Activated T-helper 1 cell treated with anti-CD3 and anti-CD28 coated beads, Interleukin-12 subunit alpha, Interleukin-12 subunit beta, Interleukin-2, Interleukin-4 antibody, amounts not matched to agents 30 ng/mL and 10 ng/mL and 1 ng/mL, durations not matched to agents 14 hours and 24 hours and 36 hours (primary cell): ENCODE measurements at regions of chr12 and their contacts with region 1.

Region 1: DNA sequence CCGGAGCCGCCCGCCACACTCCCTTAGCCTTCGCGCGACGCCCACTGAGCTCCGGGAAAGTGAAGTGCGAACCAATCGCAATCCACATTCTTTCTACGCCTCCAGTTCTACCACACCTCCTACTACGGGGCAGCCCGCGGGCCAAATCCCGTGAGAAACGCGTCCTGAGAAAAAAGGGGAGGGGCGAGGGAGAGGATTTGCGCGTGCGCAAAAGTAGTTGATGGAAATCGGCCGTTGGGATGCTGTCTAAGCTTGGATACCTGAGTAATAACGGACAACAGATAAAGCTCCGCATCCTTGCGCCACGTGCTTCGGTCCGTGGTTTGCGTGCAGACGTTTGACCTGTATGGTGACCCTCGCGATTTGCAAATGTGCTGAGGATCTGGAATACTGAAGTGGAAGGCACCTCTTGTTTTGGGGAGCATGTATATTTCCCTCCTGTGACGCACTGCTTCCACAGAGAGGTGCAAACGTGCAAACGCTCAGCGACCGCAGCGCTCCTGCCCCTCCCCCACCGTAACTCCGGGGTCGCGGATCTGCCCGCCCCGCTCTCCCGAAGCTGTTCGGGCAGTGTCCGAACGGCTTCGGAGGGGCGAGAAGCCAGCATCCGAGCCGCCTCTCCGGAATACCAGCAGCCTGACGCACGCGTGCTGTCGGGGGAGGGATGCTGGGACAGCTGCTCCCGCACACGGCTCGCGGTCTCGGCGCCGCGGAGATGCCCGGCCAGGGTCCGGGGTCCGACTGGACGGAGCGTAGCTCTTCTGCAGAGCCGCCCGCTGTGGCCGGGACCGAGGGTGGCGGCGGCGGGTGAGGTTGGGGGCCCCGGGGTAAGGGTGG is at the starts of genes FAM216A and GPN3:
- DNase-seq: peak; percentile 96
- H3K4me3 Mint-ChIP-seq: peak within 1 kb of the TSS; percentile 96
- H3K27ac Mint-ChIP-seq: peak within 1 kb of the TSS; percentile 95
- H3K4me1 Mint-ChIP-seq: peaks cover 31% of the 10 kb centered on the region
- H3K27me3 Mint-ChIP-seq: no peaks in the 10 kb centered on the region
- total RNA-seq, gene FAM216A: 40.8 and 45.9 TPM in 2 replicates
- total RNA-seq, gene GPN3: 50.3 and 55.5 TPM in 2 replicates

Region 2: DNA sequence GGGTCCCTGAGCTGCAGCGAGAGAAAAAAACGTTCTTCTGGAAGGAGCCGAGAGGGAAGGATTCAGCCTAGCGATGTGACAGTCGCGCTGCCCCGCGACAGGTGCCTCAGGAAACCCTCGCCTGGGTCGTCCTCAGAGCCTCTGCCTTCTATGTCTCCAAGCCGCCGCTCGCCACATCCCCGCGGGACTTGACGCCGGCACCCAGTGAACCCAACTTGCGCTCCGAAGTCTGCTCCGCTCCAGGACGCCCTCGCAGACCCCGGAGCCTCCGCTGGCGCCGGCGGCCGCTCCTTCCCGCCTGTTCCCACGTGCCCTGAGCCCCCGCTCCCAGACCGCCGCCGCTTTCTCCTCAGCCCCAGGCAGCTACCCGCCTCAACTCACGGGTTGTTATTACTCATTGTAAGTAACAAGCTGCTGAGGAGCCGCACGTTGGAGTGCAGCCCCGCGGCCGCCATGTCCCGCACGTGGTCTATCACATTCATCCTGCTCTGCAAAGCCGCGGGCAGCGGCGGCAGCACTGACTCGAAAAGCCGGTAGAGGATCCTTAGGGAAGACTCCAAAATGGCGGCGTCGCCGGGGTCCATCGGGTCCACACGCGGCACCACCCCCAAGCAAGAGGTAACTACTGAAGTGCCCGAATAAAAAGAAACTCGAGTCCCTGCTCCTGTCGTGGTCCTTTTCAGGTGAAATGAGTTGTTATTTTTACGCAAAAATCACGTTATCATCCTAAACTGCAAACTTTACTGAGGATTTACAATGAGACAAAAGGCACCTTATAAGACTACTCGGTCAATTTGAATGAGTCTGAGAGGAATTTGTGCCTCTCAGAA is 65.1 kb before region 1 on chr12 and contains the start of gene ANAPC7:
- intact Hi-C with region 1: loop called (anchors 1 kb)
- DNase-seq: peak; percentile 81
- H3K4me3 Mint-ChIP-seq: peak within 1 kb of the TSS; percentile 100
- H3K27ac Mint-ChIP-seq: peak within 1 kb of the TSS; percentile 97
- H3K4me1 Mint-ChIP-seq: peaks cover 25% of the 10 kb centered on the region
- H3K27me3 Mint-ChIP-seq: no peaks in the 10 kb centered on the region
- total RNA-seq, gene ANAPC7: 72.0 and 72.6 TPM in 2 replicates

Region 3: GRCh38 chr12:110501752-110502738 is 33.6 kb after region 1 on chr12 and contains the starts of genes RAD9B and VPS29:
- intact Hi-C with region 1: loop called (anchors 1 kb)
- DNase-seq: peak; percentile 99
- H3K4me3 Mint-ChIP-seq: peak within 1 kb of the TSS; percentile 90
- H3K27ac Mint-ChIP-seq: peak within 1 kb of the TSS; percentile 90
- H3K4me1 Mint-ChIP-seq: peaks cover 29% of the 10 kb centered on the region
- H3K27me3 Mint-ChIP-seq: no peaks in the 10 kb centered on the region
- total RNA-seq, gene RAD9B: 0.88 and 1.4 TPM in 2 replicates
- total RNA-seq, gene VPS29: 109 and 111 TPM in 2 replicates

Region 4: GRCh38 chr12:110583137-110584059 is 115.0 kb after region 1 on chr12 and contains the start of gene PPTC7:
- intact Hi-C with region 1: loop called (anchors 1 kb)
- DNase-seq: peak; percentile 93
- H3K4me3 Mint-ChIP-seq: peak within 1 kb of the TSS; percentile 95
- H3K27ac Mint-ChIP-seq: peak within 1 kb of the TSS; percentile 96
- H3K4me1 Mint-ChIP-seq: peaks cover 61% of the 10 kb centered on the region
- H3K27me3 Mint-ChIP-seq: peaks cover 3% of the 10 kb centered on the region
- total RNA-seq, gene PPTC7: 57.9 and 59.1 TPM in 2 replicates

Region 5: GRCh38 chr12:110698171-110698902 is 229.9 kb after region 1 on chr12:
- intact Hi-C with region 1: loop called (anchors 1 kb)
- DNase-seq: peak; percentile 78
- H3K4me3 Mint-ChIP-seq: no peak overlapping the region
- H3K27ac Mint-ChIP-seq: peak overlapping the region; percentile 85
- H3K4me1 Mint-ChIP-seq: peaks cover 19% of the 10 kb centered on the region
- H3K27me3 Mint-ChIP-seq: peaks cover 2% of the 10 kb centered on the region

Region 6: DNA sequence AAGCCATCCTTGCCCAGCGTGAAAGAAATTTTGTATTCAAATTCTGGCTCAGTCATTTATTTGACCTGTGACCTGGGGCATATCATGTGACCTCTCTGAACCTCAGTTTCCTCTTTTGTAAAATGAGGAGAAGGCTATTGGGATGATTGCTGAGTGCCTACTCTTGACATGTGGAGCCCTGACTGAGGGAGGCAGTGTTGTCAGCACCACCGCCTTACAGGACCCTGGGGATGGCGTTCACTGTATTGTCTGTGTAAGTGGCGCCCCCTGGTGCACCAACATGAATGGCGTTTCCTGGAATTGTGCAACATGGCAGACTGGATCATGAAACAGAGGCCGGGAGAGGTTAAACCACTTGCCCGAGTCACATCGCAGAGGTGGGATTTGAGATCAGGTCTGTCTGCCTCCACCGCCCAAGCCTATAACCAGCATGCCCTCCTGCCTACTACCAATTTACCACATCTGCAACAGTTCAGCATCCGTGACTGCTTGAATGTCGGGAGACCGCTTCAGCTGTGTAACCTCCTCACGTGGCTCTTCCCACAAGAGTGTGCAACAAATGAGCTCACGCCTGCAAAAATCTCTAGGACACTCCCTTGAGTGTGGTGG is 358.3 kb after region 1 on chr12:
- intact Hi-C with region 1: loop called (anchors 10 kb)
- DNase-seq: peak; percentile 79
- H3K4me3 Mint-ChIP-seq: peak overlapping the region; percentile 40
- H3K27ac Mint-ChIP-seq: peak overlapping the region; percentile 78
- H3K4me1 Mint-ChIP-seq: peaks cover 12% of the 10 kb centered on the region
- H3K27me3 Mint-ChIP-seq: peaks cover 8% of the 10 kb centered on the region